ENCODE measurements at regions of chr5 and their contacts with region 1.

Region 1: DNA sequence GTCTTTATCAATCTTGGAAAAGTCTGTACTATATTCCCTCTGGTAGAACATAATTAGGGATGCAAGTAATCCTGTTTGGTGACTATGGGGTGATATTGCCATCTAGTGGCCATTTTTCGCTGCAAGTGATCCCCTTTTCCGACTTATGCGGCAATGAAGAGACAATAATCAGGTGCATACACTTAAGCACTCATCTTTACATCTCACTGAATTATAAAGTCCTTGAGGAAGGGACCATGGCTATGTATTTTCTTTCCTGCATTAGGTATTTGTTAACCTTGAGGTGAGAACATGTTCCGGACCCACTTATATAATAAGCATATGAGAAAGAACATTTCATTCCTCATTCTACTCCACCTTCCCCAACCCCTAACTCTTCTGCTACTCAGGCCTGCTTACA is 19.6 kb upstream of the LIX1 start:
- DNase-seq: peak; percentile 70
- ATAC-seq: peak; percentile 49
- H3K4me3 Mint-ChIP-seq: no peak overlapping the region
- H3K27ac Mint-ChIP-seq: no peak overlapping the region
- H3K4me1 Mint-ChIP-seq: peaks cover 16% of the 10 kb centered on the region
- H3K27me3 Mint-ChIP-seq: no peaks in the 10 kb centered on the region

Region 2: DNA sequence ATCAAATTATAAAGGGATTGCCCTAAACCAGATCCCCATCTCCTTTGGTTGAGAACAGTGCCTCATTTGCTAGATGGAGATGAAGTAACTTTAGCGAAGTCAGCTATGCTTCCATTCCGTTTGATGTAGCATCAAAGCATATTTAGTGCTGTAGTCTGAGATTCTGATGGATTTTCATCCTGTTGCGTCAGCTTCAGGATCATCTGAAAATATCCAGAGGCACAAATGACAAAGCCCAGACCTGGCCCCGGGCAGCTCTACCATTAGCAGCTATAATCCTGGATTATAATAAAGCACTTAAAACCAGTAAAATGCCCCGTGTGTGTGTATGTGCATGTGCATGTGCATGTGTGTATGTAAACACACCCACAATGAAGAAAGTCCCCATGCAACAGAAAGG is 399.0 kb before region 1 on chr5:
- CTCF ChIA-PET with region 1: interaction called, 21 read pairs
- POLR2A ChIA-PET with region 1: no interaction called
- intact Hi-C with region 1: no loop called
- DNase-seq: no peak
- ATAC-seq: no peak
- H3K4me3 Mint-ChIP-seq: no peak overlapping the region
- H3K27ac Mint-ChIP-seq: no peak overlapping the region
- H3K4me1 Mint-ChIP-seq: no peaks in the 10 kb centered on the region
- H3K27me3 Mint-ChIP-seq: no peaks in the 10 kb centered on the region

Region 3: DNA sequence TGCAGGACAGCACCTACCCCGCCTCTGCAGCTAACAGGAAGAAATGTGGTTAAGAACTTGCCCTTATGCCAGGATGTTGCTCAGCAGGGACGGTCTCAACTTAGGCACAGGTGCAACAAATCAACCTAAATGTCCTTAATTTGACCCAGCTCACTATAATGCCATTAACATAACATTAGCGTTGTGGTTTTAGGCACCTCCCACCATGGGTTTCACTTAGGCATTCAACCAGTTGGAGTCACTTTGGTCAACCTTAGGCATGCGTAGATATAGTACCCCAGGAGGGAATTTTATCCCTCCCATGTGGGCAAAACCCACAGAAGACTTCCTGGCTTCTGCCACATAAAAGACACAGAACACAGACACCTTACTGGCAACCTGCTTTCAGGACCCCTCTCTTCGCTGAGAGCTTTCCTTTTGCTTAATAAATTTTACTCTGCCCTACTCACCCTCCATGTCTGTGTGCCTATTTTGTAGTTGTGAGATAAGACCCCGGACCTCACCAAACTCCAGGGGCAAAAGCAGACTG is 345.6 kb before region 1 on chr5:
- CTCF ChIA-PET with region 1: interaction called, 13 read pairs
- POLR2A ChIA-PET with region 1: no interaction called
- intact Hi-C with region 1: no loop called
- DNase-seq: peak; percentile 54
- ATAC-seq: peak; percentile 82
- H3K4me3 Mint-ChIP-seq: peak overlapping the region; percentile 71
- H3K27ac Mint-ChIP-seq: peak overlapping the region; percentile 90
- H3K4me1 Mint-ChIP-seq: peaks cover 58% of the 10 kb centered on the region
- H3K27me3 Mint-ChIP-seq: no peaks in the 10 kb centered on the region

Region 4: GRCh38 chr5:97044052-97044451 is 118.0 kb before region 1 on chr5:
- CTCF ChIA-PET with region 1: interaction called, 11 read pairs
- POLR2A ChIA-PET with region 1: interaction called, 3 read pairs
- intact Hi-C with region 1: no loop called
- DNase-seq: peak; percentile 13
- ATAC-seq: no peak
- H3K4me3 Mint-ChIP-seq: no peak overlapping the region
- H3K27ac Mint-ChIP-seq: no peak overlapping the region
- H3K4me1 Mint-ChIP-seq: no peaks in the 10 kb centered on the region
- H3K27me3 Mint-ChIP-seq: no peaks in the 10 kb centered on the region

Region 5: DNA sequence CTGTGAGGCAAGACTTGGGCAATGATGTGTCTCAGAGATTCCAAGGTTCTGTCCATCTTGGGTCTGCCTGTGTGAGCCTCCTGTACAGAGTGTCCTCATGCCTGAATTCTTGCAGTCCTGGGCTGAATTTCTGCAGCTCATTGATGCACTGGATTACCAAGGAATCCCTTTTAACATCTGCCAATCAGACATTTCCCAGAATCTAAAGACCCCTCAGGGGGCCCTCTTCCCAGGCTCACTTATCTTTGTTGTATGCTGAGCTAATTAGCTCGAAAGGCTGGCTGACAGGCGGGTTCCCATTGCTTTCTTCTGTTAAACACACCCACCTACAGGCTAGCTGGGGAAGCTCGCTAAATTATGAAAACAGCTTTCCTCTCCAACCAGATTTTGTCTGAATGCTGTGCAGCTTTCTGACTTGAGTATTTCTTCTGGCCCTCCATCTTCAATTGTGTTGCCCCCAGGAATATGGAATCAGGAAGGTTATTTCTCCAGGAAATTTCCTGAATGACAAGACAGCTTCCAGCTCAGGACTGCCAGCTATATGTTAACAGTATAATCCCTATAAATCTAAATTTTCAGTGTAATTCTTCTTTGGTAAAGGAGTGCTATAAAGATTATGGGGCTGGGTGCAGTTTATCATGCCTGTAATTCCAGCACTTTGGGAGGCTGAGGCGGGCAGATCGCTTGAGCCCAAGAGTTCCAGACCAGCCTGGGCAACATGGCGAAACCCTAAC is 19.4 kb before region 1 on chr5 and contains the start of gene LIX1:
- CTCF ChIA-PET with region 1: interaction called, 39 read pairs
- POLR2A ChIA-PET with region 1: no interaction called
- intact Hi-C with region 1: no loop called
- DNase-seq: peak; percentile 55
- ATAC-seq: peak; percentile 84
- H3K4me3 Mint-ChIP-seq: no peak within 1 kb of the TSS
- H3K27ac Mint-ChIP-seq: no peak within 1 kb of the TSS
- H3K4me1 Mint-ChIP-seq: no peaks in the 10 kb centered on the region
- H3K27me3 Mint-ChIP-seq: peaks cover 3% of the 10 kb centered on the region
- total RNA-seq, gene LIX1: not detected